ENCODE measurements at regions of chr7 and their contacts with region 1.

Region 1: GRCh38 chr7:150778738-150779301 is 21.3 kb downstream of the TMEM176B start:
- DNase-seq: peak; percentile 42
- H3K4me3 ChIP-seq: no peak overlapping the region
- H3K27ac ChIP-seq: no peak overlapping the region
- H3K4me1 ChIP-seq: no peaks in the 10 kb centered on the region
- H3K27me3 ChIP-seq: no peaks in the 10 kb centered on the region
- CTCF ChIP-seq: peak; percentile 86 to 92

Region 2: DNA sequence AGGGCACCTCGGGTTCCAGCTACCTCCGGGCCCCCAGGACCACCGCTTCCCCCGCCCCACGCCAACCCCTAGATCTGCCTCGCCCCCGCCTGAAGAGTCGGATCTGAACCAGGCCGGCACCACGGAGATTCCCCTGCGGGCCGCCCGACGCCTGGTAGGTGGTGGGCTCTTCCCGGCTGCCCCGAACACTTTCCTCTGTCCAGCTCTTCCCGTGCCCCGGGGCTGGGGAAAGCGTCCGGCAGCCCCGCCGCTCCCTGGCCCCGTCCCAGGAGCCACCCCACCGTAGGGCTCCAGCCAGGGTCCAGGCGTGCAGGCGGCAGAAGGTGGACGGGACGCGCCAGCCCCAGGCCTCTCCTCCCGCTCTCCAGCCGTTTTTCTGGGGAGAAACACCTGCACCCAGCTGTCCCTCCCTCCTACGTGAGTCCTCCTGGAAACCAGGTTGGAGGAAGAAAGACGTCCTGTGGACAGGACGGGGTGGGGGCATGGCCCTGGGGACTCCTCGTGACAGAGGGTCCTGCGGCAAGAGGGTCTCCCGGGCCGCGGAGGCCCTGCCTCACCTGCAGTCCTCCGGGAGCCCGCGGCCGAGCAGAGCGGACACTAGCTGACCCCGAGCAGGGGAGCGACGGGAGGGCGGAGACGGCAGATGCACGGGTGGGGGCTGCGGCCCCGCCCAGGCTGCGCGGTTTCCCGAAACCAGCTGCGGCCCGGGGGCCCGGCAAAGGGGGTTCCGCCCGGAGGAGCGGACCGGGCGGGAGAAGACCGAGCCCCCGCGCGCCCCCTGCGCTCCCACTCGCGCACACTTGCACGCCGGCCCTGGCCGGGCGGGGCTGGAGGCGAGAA is 21.1 kb after region 1 on chr7 and contains the start of gene TMEM176B:
- CTCF ChIA-PET with region 1: no interaction called
- dilution Hi-C with region 1: no loop called
- in situ Hi-C with region 1: no loop called
- intact Hi-C with region 1: no loop called
- DNase-seq: no peak
- H3K4me3 ChIP-seq: no peak within 1 kb of the TSS
- H3K27ac ChIP-seq: no peak within 1 kb of the TSS
- H3K4me1 ChIP-seq: no peaks in the 10 kb centered on the region
- H3K27me3 ChIP-seq: peaks cover 30% of the 10 kb centered on the region
- CTCF ChIP-seq: no peak
- total RNA-seq, gene TMEM176B: 0.17 TPM in 1 of 2 donors, not detected in the other

Region 3: GRCh38 chr7:150876817-150877526 is 98.2 kb after region 1 on chr7:
- CTCF ChIA-PET with region 1: no interaction called
- dilution Hi-C with region 1: no loop called
- in situ Hi-C with region 1: no loop called
- intact Hi-C with region 1: loop called (anchors 1 kb)
- DNase-seq: peak; percentile 69
- H3K4me3 ChIP-seq: no peak overlapping the region
- H3K27ac ChIP-seq: no peak overlapping the region
- H3K4me1 ChIP-seq: peaks cover 15% of the 10 kb centered on the region
- H3K27me3 ChIP-seq: no peaks in the 10 kb centered on the region
- CTCF ChIP-seq: peak; percentile 58 to 64